ENCODE measurements at regions of chr4 and their contacts with region 1.

Region 1: DNA sequence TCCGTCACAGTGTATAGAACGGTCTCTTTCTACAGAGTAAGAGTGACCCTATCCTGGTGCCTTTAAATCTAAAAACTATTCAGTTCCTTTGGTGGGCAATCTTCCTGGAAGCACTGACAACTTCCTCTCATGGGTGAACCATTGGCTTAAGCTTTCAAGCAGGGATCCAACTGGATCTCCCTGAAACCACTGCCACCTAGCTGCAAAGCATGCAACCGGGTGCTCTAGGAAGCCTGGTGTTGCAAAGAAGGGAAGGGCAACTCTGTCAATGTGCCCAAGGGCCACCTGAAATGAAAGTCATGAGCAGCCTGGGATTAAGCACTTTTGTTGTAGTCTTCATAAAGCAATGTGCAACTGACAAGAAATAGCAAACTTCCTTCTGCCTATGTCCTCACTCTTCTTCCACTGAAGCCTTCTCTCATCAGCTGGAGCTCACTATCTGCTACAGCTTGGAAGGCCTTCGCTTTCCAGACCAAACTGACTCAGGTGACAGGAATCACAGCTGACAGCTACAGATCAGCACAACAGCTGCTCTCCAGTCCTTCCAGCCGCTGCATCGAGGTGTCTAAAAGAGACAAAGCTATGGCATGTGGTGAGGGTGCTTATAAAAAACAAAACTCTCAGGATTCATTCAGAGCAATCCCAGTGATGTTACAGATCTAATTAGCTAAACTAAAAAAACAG is 46.1 kb downstream of the SETD7 start:
- DNase-seq: peak in 1 of 2 experiments; percentile 48
- H3K4me3 ChIP-seq: no peak overlapping the region
- H3K4me3 Mint-ChIP-seq: no peak overlapping the region
- H3K27ac Mint-ChIP-seq: no peak overlapping the region
- H3K4me1 ChIP-seq: no peaks in the 10 kb centered on the region
- H3K4me1 Mint-ChIP-seq: no peaks in the 10 kb centered on the region
- H3K27me3 ChIP-seq: no peaks in the 10 kb centered on the region
- H3K27me3 Mint-ChIP-seq: no peaks in the 10 kb centered on the region
- CTCF ChIP-seq: peak; percentile 23 to 85

Region 2: GRCh38 chr4:139416073-139416673 is 93.7 kb before region 1 on chr4:
- CTCF ChIA-PET with region 1: no interaction called
- POLR2A ChIA-PET with region 1: no interaction called
- intact Hi-C with region 1: loop called (anchors 1 kb)
- DNase-seq: peak in 1 of 2 experiments; percentile 43
- H3K4me3 ChIP-seq: no peak overlapping the region
- H3K4me3 Mint-ChIP-seq: no peak overlapping the region
- H3K27ac Mint-ChIP-seq: no peak overlapping the region
- H3K4me1 ChIP-seq: no peaks in the 10 kb centered on the region
- H3K4me1 Mint-ChIP-seq: peaks cover 8% of the 10 kb centered on the region
- H3K27me3 ChIP-seq: no peaks in the 10 kb centered on the region
- H3K27me3 Mint-ChIP-seq: no peaks in the 10 kb centered on the region
- CTCF ChIP-seq: peak; percentile 23 to 42

Measured in Caco-2 (cell line).